ENCODE measurements at regions of chr16 and their contacts with region 1.

Region 1: GRCh38 chr16:53476867-53477266 is 26.1 kb downstream of the AKTIP start:
- DNase-seq: no peak
- ATAC-seq: no peak
- H3K4me3 ChIP-seq: no peak overlapping the region
- H3K4me3 Mint-ChIP-seq: peak overlapping the region in 8 of 10 donors; percentile 2 to 67 (median 38)
- H3K27ac ChIP-seq: no peak overlapping the region
- H3K27ac Mint-ChIP-seq: peak overlapping the region in 8 of 9 donors; percentile 14 to 90 (median 78)
- H3K4me1 ChIP-seq: peaks cover 5 to 20% of the 10 kb centered on the region in 2 donors
- H3K4me1 Mint-ChIP-seq: peaks cover 31 to 84% (median 70%) of the 10 kb centered on the region in 7 donors
- H3K27me3 ChIP-seq: no peaks in the 10 kb centered on the region
- H3K27me3 Mint-ChIP-seq: no peaks in the 10 kb centered on the region

Region 2: DNA sequence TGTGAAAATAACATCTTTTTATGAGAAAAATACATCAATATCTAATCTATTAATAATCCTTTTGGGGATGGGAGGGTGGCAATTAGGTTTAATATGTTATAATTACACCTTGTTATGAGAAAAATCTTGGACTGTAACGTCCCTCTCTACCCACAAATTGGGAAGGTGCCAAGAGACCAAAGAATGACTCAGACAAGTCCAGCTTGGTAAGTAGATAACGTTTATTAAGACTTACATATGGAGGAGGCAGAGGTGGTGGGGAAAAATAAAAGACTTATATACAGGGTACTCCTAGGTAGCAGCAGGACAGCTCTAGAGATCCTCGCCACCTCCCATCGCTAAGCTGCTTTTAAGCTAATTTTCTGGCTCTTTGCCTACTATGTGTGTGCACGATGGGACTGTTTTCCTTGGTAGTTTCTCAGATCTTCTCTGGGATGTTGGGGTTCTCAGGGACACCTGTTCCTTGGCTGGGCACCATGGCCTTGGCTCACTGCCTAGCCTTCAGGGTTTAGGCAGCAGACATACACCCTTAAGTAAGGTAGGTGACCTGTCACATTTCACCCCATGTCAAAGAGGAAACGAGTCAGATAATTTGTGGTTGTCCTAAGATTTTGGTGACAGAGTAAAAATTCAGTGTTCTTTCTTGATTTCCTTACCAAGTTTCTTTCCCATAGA is 11.1 kb before region 1 on chr16:
- CTCF ChIA-PET with region 1: no interaction called
- POLR2A ChIA-PET with region 1: interaction called, 4 read pairs
- intact Hi-C with region 1: loop called in 1 of 2 experiments (anchors 1 kb)
- DNase-seq: no peak
- ATAC-seq: no peak
- H3K4me3 ChIP-seq: no peak overlapping the region
- H3K4me3 Mint-ChIP-seq: peak overlapping the region in 8 of 10 donors; percentile 19 to 70 (median 48)
- H3K27ac ChIP-seq: no peak overlapping the region
- H3K27ac Mint-ChIP-seq: peak overlapping the region in 8 of 9 donors; percentile 24 to 94 (median 77)
- H3K4me1 ChIP-seq: peaks cover 14 to 36% of the 10 kb centered on the region in 2 donors
- H3K4me1 Mint-ChIP-seq: peaks cover 15 to 73% (median 54%) of the 10 kb centered on the region in 7 donors
- H3K27me3 ChIP-seq: no peaks in the 10 kb centered on the region
- H3K27me3 Mint-ChIP-seq: no peaks in the 10 kb centered on the region

Region 3: DNA sequence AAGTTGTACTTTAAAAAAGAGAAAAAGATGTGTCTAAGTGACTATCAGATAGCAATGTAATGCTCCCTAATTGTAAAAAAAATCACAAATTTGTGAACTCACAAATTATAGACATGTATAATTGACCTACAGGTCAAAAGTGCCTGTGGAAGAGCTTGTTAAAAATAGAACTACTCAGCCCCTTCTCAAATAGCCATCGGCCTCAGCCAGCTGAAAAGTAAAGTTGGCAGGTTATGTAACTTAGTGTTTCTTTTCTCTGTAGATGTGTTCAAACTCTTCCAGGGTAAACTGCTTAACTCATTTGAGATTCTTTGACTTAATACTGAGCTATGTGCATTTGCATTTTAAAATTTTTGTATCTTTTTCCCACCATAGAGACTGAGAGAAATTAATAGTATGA is 12.9 kb after region 1 on chr16:
- CTCF ChIA-PET with region 1: no interaction called
- POLR2A ChIA-PET with region 1: interaction called, 13 read pairs
- intact Hi-C with region 1: loop called in 1 of 2 experiments (anchors 1 kb)
- DNase-seq: no peak
- ATAC-seq: no peak
- H3K4me3 ChIP-seq: no peak overlapping the region
- H3K4me3 Mint-ChIP-seq: peak overlapping the region in 3 of 10 donors; percentile 21 to 51 (median 48)
- H3K27ac ChIP-seq: peak overlapping the region; percentile 42
- H3K27ac Mint-ChIP-seq: peak overlapping the region in 8 of 9 donors; percentile 52 to 95 (median 74)
- H3K4me1 ChIP-seq: peaks cover 0 to 4% of the 10 kb centered on the region in 2 donors
- H3K4me1 Mint-ChIP-seq: peaks cover 11 to 70% (median 55%) of the 10 kb centered on the region in 7 donors
- H3K27me3 ChIP-seq: no peaks in the 10 kb centered on the region
- H3K27me3 Mint-ChIP-seq: no peaks in the 10 kb centered on the region

Region 4: GRCh38 chr16:53960954-53961469 is 484.1 kb after region 1 on chr16:
- CTCF ChIA-PET with region 1: no interaction called
- POLR2A ChIA-PET with region 1: no interaction called
- intact Hi-C with region 1: no loop called
- DNase-seq: no peak
- ATAC-seq: no peak
- H3K4me3 ChIP-seq: no peak overlapping the region
- H3K4me3 Mint-ChIP-seq: no peak overlapping the region
- H3K27ac ChIP-seq: no peak overlapping the region
- H3K27ac Mint-ChIP-seq: no peak overlapping the region
- H3K4me1 ChIP-seq: no peaks in the 10 kb centered on the region
- H3K4me1 Mint-ChIP-seq: peaks cover 0 to 23% (median 0%) of the 10 kb centered on the region in 7 donors
- H3K27me3 ChIP-seq: no peaks in the 10 kb centered on the region
- H3K27me3 Mint-ChIP-seq: no peaks in the 10 kb centered on the region